ENCODE measurements at regions of chr15 and their contacts with region 1.

Region 1: GRCh38 chr15:93942269-93942694 is 289.1 kb upstream of the MCTP2 start:
- DNase-seq: no peak
- ATAC-seq: peak; percentile 12

Region 2: GRCh38 chr15:93826790-93827189 is 115.5 kb before region 1 on chr15:
- intact Hi-C with region 1: loop called (anchors 10 kb)
- DNase-seq: peak; percentile 49
- ATAC-seq: peak; percentile 87

Region 3: GRCh38 chr15:94238539-94239118 is 296.3 kb after region 1 on chr15:
- intact Hi-C with region 1: no loop called
- DNase-seq: no peak
- ATAC-seq: no peak

Measured in Right ventricle myocardium inferior (tissue), 1 donor.